ENCODE measurements at regions of chr6 and their contacts with region 1.

Region 1: DNA sequence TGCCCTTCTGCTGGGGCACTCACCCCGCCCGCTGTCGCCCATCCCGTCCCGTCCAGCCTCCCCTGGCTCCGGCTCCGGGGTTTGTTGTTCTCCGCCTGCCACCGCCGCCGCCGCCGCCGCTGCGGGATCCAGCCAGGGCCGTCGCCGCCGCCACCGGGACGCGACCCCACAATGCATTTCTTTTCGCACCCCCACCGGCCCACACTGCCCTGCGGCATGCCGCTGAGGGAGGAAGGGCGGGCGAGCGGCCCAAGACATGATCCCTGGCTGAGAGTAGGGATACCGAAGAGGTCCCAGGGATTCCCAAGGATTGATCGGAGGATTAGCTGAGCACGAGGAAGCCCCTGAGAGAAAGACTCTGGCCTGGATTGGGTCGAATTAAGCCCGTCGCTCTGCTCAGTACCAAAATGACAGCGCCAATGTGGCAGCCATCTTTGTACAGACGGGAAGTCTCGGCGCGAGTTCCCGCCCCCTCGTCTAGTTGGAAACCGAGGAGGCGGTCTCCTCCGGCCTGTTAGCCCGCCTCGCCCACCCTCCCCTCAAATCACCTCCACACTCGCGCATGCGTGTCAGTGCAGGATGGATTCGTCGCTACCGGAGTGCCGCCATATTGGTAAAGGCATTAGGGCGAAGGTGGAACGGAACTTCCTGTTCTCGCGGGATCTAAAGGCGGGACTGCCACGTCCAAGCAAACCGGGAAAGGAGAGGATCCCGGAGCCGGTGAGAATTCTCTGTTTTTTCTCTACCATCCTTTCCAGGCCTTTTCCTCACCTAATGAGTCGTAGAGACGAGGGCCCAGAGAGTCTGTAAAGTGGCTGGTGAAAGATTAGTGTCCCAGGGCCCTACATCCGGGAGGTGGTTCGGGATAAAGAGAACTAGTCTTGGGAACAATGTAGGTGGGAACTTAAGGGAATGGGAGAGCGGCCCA is at the starts of genes RXRB and SLC39A7:
- DNase-seq: peak; percentile 99
- ATAC-seq: peak; percentile 81 to 86
- H3K4me3 ChIP-seq: peak within 1 kb of the TSS; percentile 84 to 98 (median 86)
- H3K27ac ChIP-seq: peak within 1 kb of the TSS; percentile 94 to 98 (median 96)
- H3K4me1 ChIP-seq: peaks cover 44 to 52% of the 10 kb centered on the region in 2 donors
- H3K27me3 ChIP-seq: no peaks in the 10 kb centered on the region
- CTCF ChIP-seq: peak in 1 of 5 experiments; percentile 20
- POLR2A ChIP-seq: peak; percentile 61 to 71
- total RNA-seq, gene RXRB: 20.8 to 38.4 (median 24.6) TPM
- total RNA-seq, gene SLC39A7: 21.9 to 45.4 (median 26.2) TPM

Region 2: DNA sequence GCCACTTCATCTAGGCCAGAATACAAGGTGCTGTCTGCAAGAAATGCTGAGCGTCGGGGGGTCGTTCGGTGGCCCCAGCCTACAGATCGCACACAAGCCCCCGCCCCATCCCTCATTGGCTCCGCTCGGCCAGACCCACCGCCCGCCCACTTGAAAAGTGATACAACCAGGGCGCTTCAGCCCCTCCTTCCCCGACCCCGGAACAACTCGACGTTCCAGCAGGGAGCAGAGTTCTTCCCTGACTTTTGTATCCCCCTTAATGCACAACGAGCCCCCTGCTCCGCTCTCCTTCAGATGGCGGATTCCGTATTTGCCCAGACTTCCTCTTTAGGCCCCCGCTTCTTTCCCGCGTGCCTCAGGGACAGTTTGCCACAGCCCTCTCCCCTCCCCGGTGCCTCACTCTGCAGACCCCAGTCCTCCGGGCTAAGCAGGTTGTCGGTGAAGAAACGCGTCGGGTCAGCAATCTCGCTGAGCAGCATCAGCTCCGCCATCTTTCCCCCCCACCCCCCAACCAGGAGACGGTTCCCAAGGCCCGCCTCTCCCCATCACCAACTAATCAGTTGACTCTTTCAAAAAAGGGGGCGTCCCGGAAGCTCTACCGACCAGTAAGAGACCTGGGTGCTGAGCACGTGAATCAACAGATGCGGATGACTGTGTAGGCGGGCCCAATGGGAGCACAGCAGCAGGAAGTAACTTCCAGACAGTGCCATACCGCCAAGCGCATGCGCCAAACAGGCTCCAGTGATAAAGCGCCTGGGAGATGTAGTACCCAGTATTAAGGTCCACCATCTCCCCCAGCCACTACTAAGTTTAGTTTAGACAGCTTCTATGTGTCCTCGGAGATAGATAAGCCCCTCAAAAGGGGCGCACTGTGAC is 1072.5 kb before region 1 on chr6 and contains the start of gene ATF6B:
- in situ Hi-C with region 1: no loop called
- intact Hi-C with region 1: loop called (anchors 5 kb)
- DNase-seq: peak; percentile 100
- ATAC-seq: peak; percentile 95 to 96
- H3K4me3 ChIP-seq: peak within 1 kb of the TSS; percentile 91 to 99 (median 96)
- H3K27ac ChIP-seq: peak within 1 kb of the TSS; percentile 89 to 93 (median 92)
- H3K4me1 ChIP-seq: peaks cover 24 to 26% of the 10 kb centered on the region in 2 donors
- H3K27me3 ChIP-seq: no peaks in the 10 kb centered on the region
- CTCF ChIP-seq: no peak
- POLR2A ChIP-seq: peak; percentile 57 to 67
- total RNA-seq, gene ATF6B: 6.8 to 18.4 (median 9.5) TPM

Region 3: DNA sequence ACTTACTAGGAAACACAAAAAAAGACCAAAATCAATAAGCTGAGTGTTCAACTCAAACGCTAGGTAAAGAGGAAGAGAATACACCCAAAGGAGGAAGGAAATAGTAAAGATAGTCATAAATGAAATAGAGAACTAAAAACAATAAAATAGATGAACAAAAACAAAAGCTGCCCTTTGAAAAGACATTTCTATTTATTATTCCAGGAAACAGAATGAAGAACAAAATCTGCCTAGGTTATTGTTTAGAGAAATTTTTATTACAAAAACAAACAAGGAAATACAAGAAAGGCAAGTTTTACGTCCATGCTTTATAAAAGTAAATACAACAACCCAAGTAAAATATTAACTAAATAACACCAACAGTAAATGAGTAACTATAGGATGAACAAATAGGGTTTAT is 279.8 kb before region 1 on chr6:
- in situ Hi-C with region 1: no loop called
- intact Hi-C with region 1: no loop called
- DNase-seq: no peak
- ATAC-seq: no peak
- H3K4me3 ChIP-seq: no peak overlapping the region
- H3K27ac ChIP-seq: no peak overlapping the region
- H3K4me1 ChIP-seq: no peaks in the 10 kb centered on the region
- H3K27me3 ChIP-seq: peaks cover 0 to 4% (median 0%) of the 10 kb centered on the region in 3 donors
- CTCF ChIP-seq: no peak
- POLR2A ChIP-seq: no peak

Region 4: DNA sequence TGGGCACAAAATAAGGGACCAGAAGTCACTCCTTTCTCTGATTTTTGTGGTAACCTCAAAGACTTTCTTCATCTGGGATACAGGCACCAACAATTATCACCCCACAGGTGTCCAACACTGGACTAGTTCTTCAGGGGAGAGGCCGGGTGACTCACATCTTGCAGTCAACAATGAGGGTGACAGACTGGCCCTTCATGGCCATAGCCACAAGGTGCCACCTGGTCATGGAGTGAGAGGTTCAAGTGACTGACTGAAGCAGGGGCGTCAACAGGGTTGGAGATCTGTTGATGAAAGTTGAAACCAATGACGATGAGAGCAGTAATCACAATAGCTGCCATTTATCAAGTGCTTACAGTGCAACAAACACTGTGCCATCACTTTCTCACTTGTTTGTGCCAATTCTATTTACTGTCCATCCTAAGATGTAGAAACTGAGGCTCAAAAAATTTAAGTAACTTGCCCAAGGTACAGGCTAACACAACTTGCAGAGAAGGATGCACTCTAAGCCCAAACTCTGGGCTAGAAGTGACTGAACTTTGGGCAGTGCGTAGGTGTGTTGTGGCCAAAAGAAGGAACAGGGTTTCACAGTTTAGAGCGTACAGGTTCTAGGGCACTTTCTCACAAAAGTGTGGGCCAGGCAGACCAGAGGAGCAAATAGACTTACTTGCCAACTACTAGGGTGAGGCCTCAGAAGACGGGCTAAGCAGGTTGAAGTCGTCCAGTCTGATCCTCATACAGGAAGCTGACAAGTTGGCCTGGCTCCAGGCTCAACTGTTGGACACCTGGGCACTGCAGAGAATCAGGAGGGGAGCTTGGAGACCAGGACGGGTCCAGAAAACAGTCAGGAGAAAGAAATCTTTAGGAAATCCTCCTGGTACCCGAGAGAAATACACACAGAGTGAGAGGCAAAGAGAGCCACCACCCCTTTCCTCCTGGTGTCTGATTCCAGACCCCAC is 94.3 kb before region 1 on chr6:
- in situ Hi-C with region 1: no loop called
- intact Hi-C with region 1: no loop called
- DNase-seq: no peak
- ATAC-seq: no peak
- H3K4me3 ChIP-seq: no peak overlapping the region
- H3K27ac ChIP-seq: no peak overlapping the region
- H3K4me1 ChIP-seq: no peaks in the 10 kb centered on the region
- H3K27me3 ChIP-seq: no peaks in the 10 kb centered on the region
- CTCF ChIP-seq: no peak
- POLR2A ChIP-seq: no peak

Region 5: GRCh38 chr6:33118525-33119123 is 81.9 kb before region 1 on chr6:
- in situ Hi-C with region 1: no loop called
- intact Hi-C with region 1: loop called (anchors 2 kb)
- DNase-seq: no peak
- ATAC-seq: peak; percentile 51 to 52
- H3K4me3 ChIP-seq: no peak overlapping the region
- H3K27ac ChIP-seq: no peak overlapping the region
- H3K4me1 ChIP-seq: no peaks in the 10 kb centered on the region
- H3K27me3 ChIP-seq: peaks cover 24 to 35% (median 29%) of the 10 kb centered on the region in 3 donors
- CTCF ChIP-seq: peak; percentile 73 to 90 (median 82)
- POLR2A ChIP-seq: no peak

Region 6: GRCh38 chr6:33299237-33299944 is 98.9 kb after region 1 on chr6:
- in situ Hi-C with region 1: no loop called
- intact Hi-C with region 1: loop called (anchors 1 kb)
- DNase-seq: peak; percentile 84 to 89
- ATAC-seq: peak; percentile 90 to 93
- H3K4me3 ChIP-seq: peak overlapping the region; percentile 71 to 86 (median 80)
- H3K27ac ChIP-seq: peak overlapping the region; percentile 96 to 99 (median 97)
- H3K4me1 ChIP-seq: peaks cover 11 to 23% of the 10 kb centered on the region in 2 donors
- H3K27me3 ChIP-seq: no peaks in the 10 kb centered on the region
- CTCF ChIP-seq: peak; percentile 55 to 85 (median 80)
- POLR2A ChIP-seq: peak; percentile 78 to 86

Region 7: GRCh38 chr6:33417903-33418689 is 217.6 kb after region 1 on chr6 and contains the start of gene CUTA:
- in situ Hi-C with region 1: no loop called
- intact Hi-C with region 1: loop called (anchors 5 kb)
- DNase-seq: peak; percentile 100
- ATAC-seq: peak; percentile 98
- H3K4me3 ChIP-seq: peak within 1 kb of the TSS; percentile 62 to 74 (median 72)
- H3K27ac ChIP-seq: peak within 1 kb of the TSS; percentile 84 to 94 (median 88)
- H3K4me1 ChIP-seq: peaks cover 20 to 22% of the 10 kb centered on the region in 2 donors
- H3K27me3 ChIP-seq: no peaks in the 10 kb centered on the region
- CTCF ChIP-seq: peak in 4 of 5 experiments; percentile 30 to 45 (median 43)
- POLR2A ChIP-seq: peak; percentile 59 to 74
- total RNA-seq, gene CUTA: 69.9 to 119 (median 93.2) TPM

Measured in gastrocnemius medialis (tissue), 4 donors.